ENCODE measurements at regions of chr19 and their contacts with region 1.

Region 1: DNA sequence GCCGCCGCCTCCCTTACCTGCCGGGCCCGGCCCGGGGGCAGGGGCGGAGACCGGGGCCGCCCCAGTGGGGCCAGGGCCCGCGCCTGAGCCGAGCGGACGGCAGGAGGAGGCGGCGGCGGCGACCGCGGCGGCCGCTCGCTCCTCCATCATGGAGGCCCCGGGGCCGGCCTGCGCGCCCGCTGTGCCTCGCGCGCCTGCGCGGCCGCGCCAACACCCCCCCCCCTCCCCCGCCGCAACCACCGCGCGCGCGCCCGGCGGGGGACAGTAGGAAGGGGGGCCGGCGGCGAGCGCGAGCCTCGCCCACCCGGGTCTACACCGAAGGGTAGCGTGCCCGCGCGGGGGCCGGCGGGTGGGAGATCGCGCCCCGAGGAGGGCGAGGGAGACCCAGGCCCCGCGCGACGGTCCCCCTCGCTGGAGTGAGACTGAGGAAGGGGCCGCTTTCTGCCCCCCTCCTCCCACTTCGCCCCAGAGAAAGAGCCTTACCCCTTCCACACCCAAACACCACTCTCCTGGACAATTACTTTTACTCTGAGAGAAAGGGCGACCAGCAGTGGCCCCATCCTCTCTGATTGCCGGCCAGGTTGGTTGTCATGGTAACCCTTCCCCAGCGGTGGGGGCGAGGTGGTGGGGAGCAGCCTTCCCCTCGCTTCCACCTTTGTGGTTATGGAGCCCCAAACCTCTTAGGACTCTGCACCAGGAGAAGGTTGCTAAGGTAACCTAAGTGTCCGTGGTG is at the start of gene STRN4:
- DNase-seq: peak in 8 of 9 experiments; percentile 50 to 85 (median 64)
- ATAC-seq: peak; percentile 74
- H3K4me3 ChIP-seq: peak within 1 kb of the TSS; percentile 79 to 90
- H3K4me3 Mint-ChIP-seq: peak within 1 kb of the TSS; percentile 89
- H3K27ac ChIP-seq: peak within 1 kb of the TSS; percentile 46 to 61
- H3K27ac Mint-ChIP-seq: peak within 1 kb of the TSS; percentile 88
- H3K4me1 ChIP-seq: peaks cover 33% of the 10 kb centered on the region
- H3K4me1 Mint-ChIP-seq: peaks cover 51% of the 10 kb centered on the region
- H3K27me3 ChIP-seq: no peaks in the 10 kb centered on the region
- H3K27me3 Mint-ChIP-seq: no peaks in the 10 kb centered on the region
- CTCF ChIP-seq: no peak
- total RNA-seq, gene STRN4: 120 to 126 TPM

Region 2: DNA sequence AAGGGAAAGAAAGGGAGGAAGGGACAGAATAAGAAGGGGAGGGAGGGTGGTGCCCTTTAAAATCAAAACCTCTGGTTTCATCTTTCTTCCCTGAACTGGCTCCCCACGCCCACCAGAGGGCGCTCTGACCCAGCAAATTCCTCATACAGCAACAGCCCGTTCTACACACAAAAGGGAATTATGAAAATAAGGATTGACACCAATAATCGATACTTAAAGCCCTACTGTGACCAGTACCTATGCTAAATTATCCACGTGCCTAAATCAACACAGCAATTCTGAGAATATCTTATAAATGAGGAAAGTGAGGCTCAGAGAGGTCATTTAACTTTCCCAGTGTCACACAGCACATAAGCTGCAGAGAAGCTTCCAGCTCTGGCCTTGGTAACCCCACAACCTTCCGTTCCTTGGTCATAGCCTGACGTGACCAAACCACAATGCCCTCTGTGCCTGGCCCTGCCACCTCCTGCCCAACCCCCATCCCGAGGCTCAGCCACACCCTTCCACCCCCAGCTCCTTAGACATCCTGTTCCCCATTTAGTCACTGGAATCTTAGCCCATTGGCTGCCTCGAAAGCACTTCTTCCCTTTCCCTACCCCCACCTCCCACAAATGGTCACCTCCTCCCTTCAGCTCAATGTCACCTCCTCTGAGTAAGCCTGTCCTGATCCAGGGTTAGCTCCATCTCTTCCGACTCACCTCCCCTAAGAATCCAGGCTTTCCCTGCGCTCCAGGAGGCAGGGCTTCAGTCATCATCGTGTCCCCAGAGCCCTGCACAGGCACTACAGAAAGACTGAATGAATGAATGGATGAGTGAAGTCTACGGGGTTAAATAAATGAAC is 216.6 kb before region 1 on chr19:
- CTCF ChIA-PET with region 1: no interaction called
- POLR2A ChIA-PET with region 1: no interaction called
- intact Hi-C with region 1: loop called in 1 of 2 experiments (anchors 2 kb)
- DNase-seq: peak; percentile 57 to 88 (median 74)
- ATAC-seq: peak; percentile 75
- H3K4me3 ChIP-seq: no peak overlapping the region
- H3K4me3 Mint-ChIP-seq: no peak overlapping the region
- H3K27ac ChIP-seq: no peak overlapping the region
- H3K27ac Mint-ChIP-seq: no peak overlapping the region
- H3K4me1 ChIP-seq: peaks cover 4% of the 10 kb centered on the region
- H3K4me1 Mint-ChIP-seq: peaks cover 13% of the 10 kb centered on the region
- H3K27me3 ChIP-seq: peaks cover 0 to 2% of the 10 kb centered on the region in 2 experiments
- H3K27me3 Mint-ChIP-seq: no peaks in the 10 kb centered on the region
- CTCF ChIP-seq: peak; percentile 99

Region 3: GRCh38 chr19:46717034-46717723 is 29.3 kb before region 1 on chr19 and contains the start of gene PRKD2:
- CTCF ChIA-PET with region 1: interaction called, 3 read pairs
- POLR2A ChIA-PET with region 1: interaction called, 3 read pairs
- intact Hi-C with region 1: loop called in 1 of 2 experiments (anchors 1 kb)
- DNase-seq: peak; percentile 60 to 91 (median 86)
- ATAC-seq: peak; percentile 51
- H3K4me3 ChIP-seq: peak within 1 kb of the TSS; percentile 71 to 73
- H3K4me3 Mint-ChIP-seq: peak within 1 kb of the TSS; percentile 92
- H3K27ac ChIP-seq: peak within 1 kb of the TSS; percentile 77 to 94
- H3K27ac Mint-ChIP-seq: peak within 1 kb of the TSS; percentile 99
- H3K4me1 ChIP-seq: peaks cover 37% of the 10 kb centered on the region
- H3K4me1 Mint-ChIP-seq: peaks cover 45% of the 10 kb centered on the region
- H3K27me3 ChIP-seq: no peaks in the 10 kb centered on the region
- H3K27me3 Mint-ChIP-seq: no peaks in the 10 kb centered on the region
- CTCF ChIP-seq: no peak
- total RNA-seq, gene PRKD2: 81.1 to 89.7 TPM

Region 4: GRCh38 chr19:46840136-46840942 is 93.9 kb after region 1 on chr19:
- CTCF ChIA-PET with region 1: interaction called, 287 read pairs
- POLR2A ChIA-PET with region 1: no interaction called
- intact Hi-C with region 1: no loop called
- DNase-seq: peak in 6 of 9 experiments; percentile 52 to 83 (median 62)
- ATAC-seq: peak; percentile 95
- H3K4me3 ChIP-seq: no peak overlapping the region
- H3K4me3 Mint-ChIP-seq: no peak overlapping the region
- H3K27ac ChIP-seq: no peak overlapping the region
- H3K27ac Mint-ChIP-seq: no peak overlapping the region
- H3K4me1 ChIP-seq: no peaks in the 10 kb centered on the region
- H3K4me1 Mint-ChIP-seq: no peaks in the 10 kb centered on the region
- H3K27me3 ChIP-seq: no peaks in the 10 kb centered on the region
- H3K27me3 Mint-ChIP-seq: no peaks in the 10 kb centered on the region
- CTCF ChIP-seq: peak; percentile 77

Measured in CD8-positive, alpha-beta T cell (primary cell).